ENCODE measurements at regions of chr11 and their contacts with region 1.

Region 1: DNA sequence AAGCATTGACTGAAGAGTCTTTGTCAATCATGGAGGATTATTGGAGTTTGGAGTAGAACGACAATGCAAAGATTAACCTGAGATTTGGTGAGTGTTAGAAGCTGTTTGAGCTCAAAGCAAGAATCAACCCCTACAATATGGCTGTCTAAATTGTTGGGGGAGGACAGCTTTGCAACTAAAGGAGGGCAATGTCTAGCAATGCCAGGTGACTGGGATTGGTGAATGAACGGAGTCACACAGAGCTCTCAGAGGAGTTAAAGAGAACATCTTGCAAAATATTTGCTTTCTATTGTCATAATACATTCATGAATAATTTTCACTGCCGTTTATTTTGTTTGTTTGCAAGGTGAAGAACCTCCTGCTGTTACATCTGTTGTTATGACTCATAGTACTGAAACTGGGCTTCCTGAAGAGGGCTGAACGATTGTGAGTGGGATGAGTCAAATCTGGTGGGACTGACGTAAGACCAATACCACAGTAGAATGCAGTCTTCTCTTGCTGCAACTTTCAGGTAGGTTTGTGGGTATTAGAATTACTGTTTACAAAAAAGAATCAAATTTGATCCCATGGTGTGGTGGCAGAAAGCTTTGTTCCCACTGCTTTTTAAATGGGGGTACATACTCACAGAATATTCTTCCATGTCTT is 281.9 kb downstream of the CADM1 start:
- DNase-seq: no peak
- ATAC-seq: peak; percentile 44 to 85 (median 68)
- H3K4me3 ChIP-seq: no peak overlapping the region
- H3K27ac ChIP-seq: peak overlapping the region; percentile 88
- H3K4me1 ChIP-seq: peaks cover 33% of the 10 kb centered on the region
- H3K27me3 ChIP-seq: no peaks in the 10 kb centered on the region
- CTCF ChIP-seq: no peak

Region 2: DNA sequence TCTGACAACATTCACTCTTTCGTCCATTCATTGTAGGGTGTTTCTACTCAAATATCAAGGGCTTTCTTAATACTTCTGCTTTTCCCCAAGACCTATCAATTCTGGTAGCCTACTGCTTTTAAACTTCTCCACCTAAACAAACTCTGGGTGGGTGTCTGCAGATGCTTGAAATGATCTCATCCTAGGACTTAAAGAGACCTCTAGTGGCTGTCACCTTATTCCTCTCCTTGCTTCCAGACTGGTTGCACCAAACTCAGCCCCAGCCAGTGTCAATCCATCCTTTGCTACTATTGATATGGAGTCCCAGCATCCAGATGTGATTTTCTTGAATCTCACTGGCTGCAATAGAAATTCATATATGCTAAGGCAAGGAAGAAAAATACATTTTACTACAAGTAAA is 269.3 kb before region 1 on chr11:
- intact Hi-C with region 1: no loop called
- DNase-seq: no peak
- ATAC-seq: no peak
- H3K4me3 ChIP-seq: no peak overlapping the region
- H3K27ac ChIP-seq: no peak overlapping the region
- H3K4me1 ChIP-seq: no peaks in the 10 kb centered on the region
- H3K27me3 ChIP-seq: no peaks in the 10 kb centered on the region
- CTCF ChIP-seq: peak; percentile 31

Region 3: GRCh38 chr11:115103921-115104320 is 118.4 kb before region 1 on chr11:
- intact Hi-C with region 1: loop called in 1 of 2 experiments (anchors 10 kb)
- DNase-seq: no peak
- ATAC-seq: no peak
- H3K4me3 ChIP-seq: no peak overlapping the region
- H3K27ac ChIP-seq: no peak overlapping the region
- H3K4me1 ChIP-seq: no peaks in the 10 kb centered on the region
- H3K27me3 ChIP-seq: no peaks in the 10 kb centered on the region
- CTCF ChIP-seq: no peak

Region 4: DNA sequence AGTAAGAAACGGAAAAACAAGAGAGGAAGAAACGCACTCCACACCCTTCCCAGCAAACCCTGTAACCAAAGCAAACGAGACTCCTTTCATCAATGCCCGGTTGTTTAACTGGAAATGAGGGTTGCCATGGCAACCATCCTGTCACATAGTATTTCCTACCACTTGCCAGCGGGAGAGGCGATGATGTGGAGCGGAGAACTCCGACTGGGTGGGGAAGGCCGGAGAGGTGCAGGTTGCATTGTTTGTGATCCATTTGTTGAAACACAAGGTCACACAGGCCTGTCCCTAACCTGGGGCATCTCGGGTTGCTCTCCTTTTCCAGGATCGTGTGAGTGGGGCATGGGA is 940.5 kb after region 1 on chr11:
- intact Hi-C with region 1: no loop called
- DNase-seq: no peak
- ATAC-seq: no peak
- H3K4me3 ChIP-seq: no peak overlapping the region
- H3K27ac ChIP-seq: no peak overlapping the region
- H3K4me1 ChIP-seq: no peaks in the 10 kb centered on the region
- H3K27me3 ChIP-seq: peaks cover 0 to 11% (median 6%) of the 10 kb centered on the region in 3 donors
- CTCF ChIP-seq: no peak